ENCODE measurements at regions of chr13 and their contacts with region 1.

Region 1: GRCh38 chr13:98542568-98543377 is 34.1 kb downstream of the STK24 start:
- DNase-seq: peak; percentile 74
- H3K4me3 Mint-ChIP-seq: peak overlapping the region; percentile 77
- H3K27ac Mint-ChIP-seq: peak overlapping the region; percentile 75
- H3K4me1 Mint-ChIP-seq: peaks cover 76% of the 10 kb centered on the region
- H3K27me3 Mint-ChIP-seq: no peaks in the 10 kb centered on the region

Region 2: GRCh38 chr13:98370806-98371515 is 171.8 kb before region 1 on chr13:
- intact Hi-C with region 1: no loop called
- DNase-seq: no peak
- H3K4me3 Mint-ChIP-seq: no peak overlapping the region
- H3K27ac Mint-ChIP-seq: no peak overlapping the region
- H3K4me1 Mint-ChIP-seq: no peaks in the 10 kb centered on the region
- H3K27me3 Mint-ChIP-seq: no peaks in the 10 kb centered on the region

Region 3: DNA sequence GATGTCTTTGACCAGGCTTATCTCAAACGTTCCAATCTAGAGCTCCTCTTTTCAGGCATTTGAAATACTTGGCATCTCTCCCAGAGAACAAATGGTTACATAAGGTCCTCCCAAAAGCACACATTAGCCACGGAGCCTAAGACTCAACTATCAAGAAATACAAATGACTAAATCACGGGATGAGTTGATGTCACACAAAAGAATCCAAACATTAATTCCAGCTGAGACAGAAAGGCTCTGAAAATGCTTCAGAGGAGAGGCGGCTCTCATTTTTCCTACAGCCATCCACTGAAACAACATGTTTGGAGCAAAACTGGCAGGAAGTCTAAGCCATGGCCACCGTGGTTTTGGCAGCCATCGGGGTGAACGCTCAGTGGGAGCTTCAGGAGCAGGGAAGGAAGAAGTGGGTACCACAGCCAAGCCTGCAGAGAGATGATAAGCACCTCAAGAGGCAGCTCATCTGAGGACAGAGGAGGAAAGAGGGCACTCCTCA is 88.3 kb before region 1 on chr13:
- intact Hi-C with region 1: no loop called
- DNase-seq: no peak
- H3K4me3 Mint-ChIP-seq: no peak overlapping the region
- H3K27ac Mint-ChIP-seq: peak overlapping the region; percentile 32
- H3K4me1 Mint-ChIP-seq: peaks cover 18% of the 10 kb centered on the region
- H3K27me3 Mint-ChIP-seq: no peaks in the 10 kb centered on the region

Region 4: DNA sequence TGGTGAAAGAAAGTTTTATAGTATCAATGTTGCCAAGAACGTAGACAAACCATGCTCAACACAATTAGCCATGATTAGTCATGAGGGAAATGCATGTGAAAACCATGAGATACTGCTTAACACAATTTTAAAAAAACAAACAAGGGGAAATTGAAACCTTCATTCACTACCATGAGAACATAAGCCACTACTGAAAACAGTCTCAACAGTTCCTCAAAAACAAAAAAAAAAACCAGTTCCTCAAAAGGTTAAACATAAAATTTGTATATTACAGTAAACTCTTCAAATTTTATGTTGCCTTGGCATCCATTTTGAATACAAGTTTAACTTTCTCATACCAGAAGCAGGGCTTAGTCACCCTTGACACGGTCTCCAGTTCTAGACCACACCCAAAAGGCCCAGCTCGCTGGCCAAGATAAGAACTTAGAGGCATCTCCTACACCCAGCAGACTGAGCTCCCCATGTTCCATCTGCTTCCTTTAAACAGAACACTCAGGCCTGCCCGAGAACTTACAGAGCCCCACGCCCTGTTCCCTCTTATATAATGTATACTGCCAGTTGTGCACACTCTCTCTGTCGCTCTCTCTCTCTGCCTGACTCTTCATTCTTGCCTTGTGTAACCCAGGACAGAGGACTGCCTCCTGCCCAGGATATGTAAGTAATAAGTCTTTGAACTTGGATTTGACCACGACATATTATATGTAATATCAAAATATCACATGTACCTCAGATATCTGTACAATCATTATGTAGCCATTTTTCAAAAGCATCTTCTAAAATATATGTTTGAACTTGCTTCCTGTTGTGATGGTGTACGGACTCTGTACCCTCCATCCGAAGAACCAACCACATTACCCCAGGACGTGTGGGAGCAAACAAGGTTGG is 33.3 kb before region 1 on chr13:
- intact Hi-C with region 1: loop called (anchors 2 kb)
- DNase-seq: peak; percentile 80
- H3K4me3 Mint-ChIP-seq: peak overlapping the region; percentile 54
- H3K27ac Mint-ChIP-seq: peak overlapping the region; percentile 89
- H3K4me1 Mint-ChIP-seq: peaks cover 74% of the 10 kb centered on the region
- H3K27me3 Mint-ChIP-seq: no peaks in the 10 kb centered on the region

Region 5: GRCh38 chr13:98528663-98529570 is 13.9 kb before region 1 on chr13:
- intact Hi-C with region 1: loop called (anchors 2 kb)
- DNase-seq: no peak
- H3K4me3 Mint-ChIP-seq: peak overlapping the region; percentile 21
- H3K27ac Mint-ChIP-seq: peak overlapping the region; percentile 87
- H3K4me1 Mint-ChIP-seq: peaks cover 62% of the 10 kb centered on the region
- H3K27me3 Mint-ChIP-seq: no peaks in the 10 kb centered on the region